ENCODE measurements at regions of chr12 and their contacts with region 1.

Region 1: DNA sequence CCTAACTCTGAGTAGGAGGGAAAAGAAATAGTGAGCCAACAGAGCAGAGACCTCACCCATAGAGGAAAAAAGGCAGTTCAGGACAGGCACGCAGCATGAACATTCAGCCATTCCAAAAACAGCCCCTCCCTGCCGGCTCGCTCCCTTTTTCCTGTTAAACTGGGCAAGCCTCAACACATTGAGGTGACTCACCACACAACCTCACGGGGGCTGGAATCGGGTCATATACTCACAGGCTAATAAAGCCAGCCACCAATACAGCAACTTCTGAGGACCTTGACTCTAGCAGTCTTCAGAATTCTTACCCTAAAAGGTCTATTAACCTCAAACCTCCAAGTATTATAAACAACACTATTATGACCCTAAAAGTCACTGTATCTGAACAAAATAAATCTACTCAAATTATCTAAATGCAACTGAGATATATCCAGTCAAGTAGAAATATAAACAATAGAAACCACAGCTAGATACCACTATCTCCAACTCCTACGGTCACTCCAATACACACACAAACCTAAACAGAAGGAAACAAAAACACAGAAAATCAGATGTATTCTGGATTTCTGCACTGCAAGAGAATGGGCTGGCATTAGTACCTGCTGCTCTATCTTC is 6.3 kb downstream of the YBX3 start:
- DNase-seq: peak; percentile 91 to 92
- ATAC-seq: peak; percentile 60 to 63
- H3K4me3 ChIP-seq: peak overlapping the region; percentile 62 to 99 (median 87)
- H3K27ac ChIP-seq: peak overlapping the region; percentile 97 to 100 (median 98)
- H3K4me1 ChIP-seq: peaks cover 48 to 68% of the 10 kb centered on the region in 2 donors
- H3K27me3 ChIP-seq: no peaks in the 10 kb centered on the region
- CTCF ChIP-seq: no peak
- POLR2A ChIP-seq: peak; percentile 75 to 95

Region 2: GRCh38 chr12:10705655-10706054 is 11.2 kb before region 1 on chr12:
- in situ Hi-C with region 1: no loop called
- intact Hi-C with region 1: loop called (anchors 2 kb)
- DNase-seq: no peak
- ATAC-seq: peak; percentile 61
- H3K4me3 ChIP-seq: peak overlapping the region in 2 of 4 donors; percentile 20 to 27
- H3K27ac ChIP-seq: peak overlapping the region; percentile 97 to 100 (median 98)
- H3K4me1 ChIP-seq: peaks cover 63 to 80% of the 10 kb centered on the region in 2 donors
- H3K27me3 ChIP-seq: no peaks in the 10 kb centered on the region
- CTCF ChIP-seq: no peak
- POLR2A ChIP-seq: no peak